ENCODE measurements at regions of chr11 and their contacts with region 1.

Region 1: GRCh38 chr11:60899046-60899936 is 7.1 kb downstream of the PRPF19 start:
- DNase-seq: no peak
- ATAC-seq: peak; percentile 62 to 77
- H3K4me3 ChIP-seq: no peak overlapping the region
- H3K27ac ChIP-seq: no peak overlapping the region
- H3K4me1 ChIP-seq: no peaks in the 10 kb centered on the region
- H3K27me3 ChIP-seq: no peaks in the 10 kb centered on the region

Region 2: GRCh38 chr11:60838132-60838531 is 61.2 kb before region 1 on chr11:
- intact Hi-C with region 1: loop called (anchors 5 kb)
- DNase-seq: peak in 1 of 3 donors; percentile 20
- ATAC-seq: no peak
- H3K4me3 ChIP-seq: no peak overlapping the region
- H3K27ac ChIP-seq: no peak overlapping the region
- H3K4me1 ChIP-seq: peaks cover 10% of the 10 kb centered on the region
- H3K27me3 ChIP-seq: no peaks in the 10 kb centered on the region

Region 3: DNA sequence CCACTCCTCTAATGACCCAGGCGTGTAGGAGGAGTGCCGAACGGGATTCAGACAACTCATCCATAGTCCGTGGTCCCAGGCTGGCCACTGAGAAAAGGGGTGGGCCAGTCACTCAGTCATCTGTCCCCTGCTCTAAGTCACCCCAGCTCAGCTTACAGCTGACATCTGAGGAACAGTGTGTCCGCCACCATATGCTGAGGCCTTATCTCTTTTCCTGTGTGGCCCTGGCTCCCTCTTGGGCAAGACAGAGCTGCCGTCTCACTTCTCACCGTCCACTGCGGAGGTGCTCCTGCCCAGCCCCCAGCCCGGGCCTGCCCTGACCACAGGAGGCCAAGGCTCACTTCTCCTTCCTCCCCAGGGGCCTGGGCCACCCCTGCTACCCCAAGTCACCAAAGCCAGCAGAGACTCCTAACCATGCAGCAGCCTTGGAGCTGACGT is 50.6 kb before region 1 on chr11:
- intact Hi-C with region 1: no loop called
- DNase-seq: no peak
- ATAC-seq: no peak
- H3K4me3 ChIP-seq: no peak overlapping the region
- H3K27ac ChIP-seq: no peak overlapping the region
- H3K4me1 ChIP-seq: peaks cover 4% of the 10 kb centered on the region
- H3K27me3 ChIP-seq: no peaks in the 10 kb centered on the region

Region 4: GRCh38 chr11:61747192-61747966 is 848.1 kb after region 1 on chr11:
- intact Hi-C with region 1: no loop called
- DNase-seq: peak; percentile 84 to 94 (median 91)
- ATAC-seq: peak; percentile 80 to 83
- H3K4me3 ChIP-seq: no peak overlapping the region
- H3K27ac ChIP-seq: no peak overlapping the region
- H3K4me1 ChIP-seq: no peaks in the 10 kb centered on the region
- H3K27me3 ChIP-seq: no peaks in the 10 kb centered on the region

Measured in right cardiac atrium (tissue), 5 donors.